ENCODE measurements at regions of chr13 and their contacts with region 1.

Region 1: GRCh38 chr13:32639502-32640105 is 53.4 kb downstream of the PDS5B start:
- DNase-seq: no peak
- H3K4me3 ChIP-seq: no peak overlapping the region
- H3K27ac ChIP-seq: no peak overlapping the region
- H3K4me1 ChIP-seq: peaks cover 55% of the 10 kb centered on the region
- H3K27me3 ChIP-seq: no peaks in the 10 kb centered on the region
- CTCF ChIP-seq: peak in 2 of 3 experiments; percentile 59 to 74
- POLR2A ChIP-seq: no peak

Region 2: GRCh38 chr13:32586080-32586900 is 53.3 kb before region 1 on chr13 and contains the start of gene PDS5B:
- intact Hi-C with region 1: loop called (anchors 10 kb)
- DNase-seq: peak in 1 of 2 donors; percentile 93
- H3K4me3 ChIP-seq: peak within 1 kb of the TSS; percentile 88 to 91
- H3K27ac ChIP-seq: peak within 1 kb of the TSS; percentile 99
- H3K4me1 ChIP-seq: peaks cover 32% of the 10 kb centered on the region
- H3K27me3 ChIP-seq: no peaks in the 10 kb centered on the region
- CTCF ChIP-seq: peak; percentile 60 to 95 (median 91)
- POLR2A ChIP-seq: peak in 1 of 2 donors; percentile 48
- total RNA-seq, gene PDS5B: 49.4 TPM